Heart left ventricle (tissue), 16 donors: ENCODE measurements at regions of chr4 and their contacts with region 1.

Region 1: GRCh38 chr4:168724686-168725411 is 228.0 kb downstream of the PALLD start:
- DNase-seq: no peak
- ATAC-seq: no peak
- H3K4me3 ChIP-seq: no peak overlapping the region
- H3K27ac ChIP-seq: no peak overlapping the region
- H3K4me1 ChIP-seq: peaks cover 0 to 29% (median 14%) of the 10 kb centered on the region in 12 donors
- H3K27me3 ChIP-seq: no peaks in the 10 kb centered on the region
- CTCF ChIP-seq: no peak
- POLR2A ChIP-seq: no peak

Region 2: GRCh38 chr4:168076989-168077725 is 647.7 kb before region 1 on chr4:
- intact Hi-C with region 1: no loop called
- DNase-seq: peak in 3 of 5 donors; percentile 18 to 27 (median 20)
- ATAC-seq: peak in 1 of 4 donors; percentile 59
- H3K4me3 ChIP-seq: no peak overlapping the region
- H3K27ac ChIP-seq: no peak overlapping the region
- H3K4me1 ChIP-seq: no peaks in the 10 kb centered on the region
- H3K27me3 ChIP-seq: no peaks in the 10 kb centered on the region
- CTCF ChIP-seq: peak; percentile 56 to 81 (median 70)
- POLR2A ChIP-seq: no peak

Region 3: GRCh38 chr4:168388890-168389289 is 336.0 kb before region 1 on chr4:
- intact Hi-C with region 1: no loop called
- DNase-seq: no peak
- ATAC-seq: no peak
- H3K4me3 ChIP-seq: no peak overlapping the region
- H3K27ac ChIP-seq: no peak overlapping the region
- H3K4me1 ChIP-seq: peaks cover 0 to 8% (median 0%) of the 10 kb centered on the region in 12 donors
- H3K27me3 ChIP-seq: no peaks in the 10 kb centered on the region
- CTCF ChIP-seq: no peak
- POLR2A ChIP-seq: no peak

Region 4: GRCh38 chr4:168765726-168766125 is 40.9 kb after region 1 on chr4:
- intact Hi-C with region 1: loop called in 1 of 10 experiments (anchors 5 kb)
- DNase-seq: peak in 4 of 5 donors; percentile 38 to 75 (median 56)
- ATAC-seq: peak; percentile 53 to 73 (median 60)
- H3K4me3 ChIP-seq: no peak overlapping the region
- H3K27ac ChIP-seq: peak overlapping the region; percentile 3 to 83 (median 56)
- H3K4me1 ChIP-seq: peaks cover 0 to 52% (median 33%) of the 10 kb centered on the region in 12 donors
- H3K27me3 ChIP-seq: no peaks in the 10 kb centered on the region
- CTCF ChIP-seq: no peak
- POLR2A ChIP-seq: no peak